Left lung (tissue), 14 donors: ENCODE measurements at regions of chr13 and their contacts with region 1.

Region 1: GRCh38 chr13:23243066-23243465 is 62.3 kb downstream of the SGCG start:
- DNase-seq: no peak
- ATAC-seq: no peak
- H3K4me3 ChIP-seq: no peak overlapping the region
- H3K27ac ChIP-seq: no peak overlapping the region
- H3K4me1 ChIP-seq: no peaks in the 10 kb centered on the region
- H3K27me3 ChIP-seq: no peaks in the 10 kb centered on the region
- CTCF ChIP-seq: no peak

Region 2: GRCh38 chr13:24039621-24040475 is 796.8 kb after region 1 on chr13:
- intact Hi-C with region 1: loop called in 1 of 2 experiments (anchors 10 kb)
- DNase-seq: no peak
- ATAC-seq: no peak
- H3K4me3 ChIP-seq: no peak overlapping the region
- H3K27ac ChIP-seq: no peak overlapping the region
- H3K4me1 ChIP-seq: peaks cover 0 to 8% of the 10 kb centered on the region in 2 donors
- H3K27me3 ChIP-seq: no peaks in the 10 kb centered on the region
- CTCF ChIP-seq: no peak